ENCODE measurements at regions of chr11 and their contacts with region 1.

Region 1: DNA sequence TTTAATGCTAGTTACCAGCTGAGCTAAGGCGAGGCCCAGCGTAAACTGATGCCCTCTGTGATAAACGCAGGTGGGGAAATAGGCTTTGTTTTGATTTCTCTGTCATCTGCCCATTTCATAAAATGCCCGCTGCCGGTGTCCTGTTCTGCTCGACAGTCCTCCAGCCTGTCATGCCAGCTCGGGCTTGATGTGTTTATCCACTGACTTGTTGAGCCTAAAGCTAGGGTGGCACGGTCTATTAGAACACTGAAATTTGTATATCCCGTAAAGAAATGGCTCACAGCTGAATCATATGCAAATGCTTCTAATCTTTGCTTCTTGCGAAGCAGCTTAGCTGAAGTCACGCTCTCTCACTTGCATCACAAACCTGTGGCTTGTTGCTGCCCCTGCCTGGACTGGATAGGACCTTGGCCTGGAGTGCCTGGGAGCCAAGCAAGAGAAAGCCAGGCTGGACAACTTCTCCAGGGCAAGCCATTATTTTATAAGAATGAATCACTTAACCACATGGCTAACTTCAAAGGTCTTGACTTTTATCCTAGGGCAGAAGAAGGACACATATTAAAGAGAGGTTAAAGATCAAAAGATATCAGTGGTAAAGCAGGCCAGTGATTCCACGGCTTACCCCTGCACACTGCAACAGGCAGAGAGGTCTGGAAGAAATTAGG is 33.1 kb downstream of the EHF start:
- DNase-seq: peak; percentile 58 to 81
- ATAC-seq: peak; percentile 77 to 84 (median 81)
- H3K4me3 ChIP-seq: no peak overlapping the region
- H3K27ac ChIP-seq: peak overlapping the region; percentile 85
- H3K4me1 ChIP-seq: peaks cover 19% of the 10 kb centered on the region
- H3K27me3 ChIP-seq: no peaks in the 10 kb centered on the region
- CTCF ChIP-seq: no peak

Region 2: GRCh38 chr11:34749666-34750659 is 96.0 kb after region 1 on chr11:
- intact Hi-C with region 1: loop called (anchors 10 kb)
- DNase-seq: peak; percentile 80 to 89
- ATAC-seq: peak; percentile 68 to 92 (median 88)
- H3K4me3 ChIP-seq: peak overlapping the region; percentile 22
- H3K27ac ChIP-seq: peak overlapping the region; percentile 9
- H3K4me1 ChIP-seq: peaks cover 38% of the 10 kb centered on the region
- H3K27me3 ChIP-seq: no peaks in the 10 kb centered on the region
- CTCF ChIP-seq: no peak

Region 3: GRCh38 chr11:34809191-34810106 is 155.5 kb after region 1 on chr11:
- intact Hi-C with region 1: no loop called
- DNase-seq: no peak
- ATAC-seq: no peak
- H3K4me3 ChIP-seq: no peak overlapping the region
- H3K27ac ChIP-seq: no peak overlapping the region
- H3K4me1 ChIP-seq: no peaks in the 10 kb centered on the region
- H3K27me3 ChIP-seq: no peaks in the 10 kb centered on the region
- CTCF ChIP-seq: no peak

Region 4: DNA sequence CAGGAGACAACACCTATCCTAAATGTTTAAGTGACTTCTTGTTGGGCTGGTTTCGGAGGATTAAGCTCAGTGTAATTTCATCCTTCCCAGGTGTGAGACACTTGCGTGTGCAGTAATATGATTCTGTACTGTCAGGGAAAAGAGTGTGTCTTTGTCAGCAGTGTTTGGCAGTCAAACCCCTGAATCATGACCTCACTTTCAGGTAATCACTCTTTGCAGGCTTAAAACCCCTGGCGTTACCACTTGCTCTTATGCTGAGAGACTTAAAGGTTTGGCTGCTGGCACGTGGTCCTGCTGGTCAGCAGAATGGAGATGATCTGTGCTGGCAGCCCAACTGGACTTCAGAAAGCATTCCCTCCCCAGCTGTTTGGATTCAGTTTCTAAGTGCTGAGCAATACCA is 206.1 kb after region 1 on chr11:
- intact Hi-C with region 1: loop called in 1 of 2 experiments (anchors 1 kb)
- DNase-seq: peak; percentile 34 to 64
- ATAC-seq: peak; percentile 85 to 90 (median 88)
- H3K4me3 ChIP-seq: no peak overlapping the region
- H3K27ac ChIP-seq: peak overlapping the region; percentile 75
- H3K4me1 ChIP-seq: peaks cover 44% of the 10 kb centered on the region
- H3K27me3 ChIP-seq: no peaks in the 10 kb centered on the region
- CTCF ChIP-seq: no peak

Region 5: GRCh38 chr11:34899633-34900016 is 245.7 kb after region 1 on chr11:
- intact Hi-C with region 1: loop called in 1 of 2 experiments (anchors 10 kb)
- DNase-seq: no peak
- ATAC-seq: no peak
- H3K4me3 ChIP-seq: no peak overlapping the region
- H3K27ac ChIP-seq: no peak overlapping the region
- H3K4me1 ChIP-seq: peaks cover 9% of the 10 kb centered on the region
- H3K27me3 ChIP-seq: no peaks in the 10 kb centered on the region
- CTCF ChIP-seq: no peak

Measured in psoas muscle (tissue), 8 donors.